Left cardiac atrium (tissue), 4 donors: ENCODE measurements at regions of chr4 and their contacts with region 1.

Region 1: GRCh38 chr4:101347557-101348366 is 436 bp upstream of the PPP3CA start:
- DNase-seq: peak; percentile 99
- ATAC-seq: peak; percentile 92 to 95

Region 2: GRCh38 chr4:101169044-101170014 is 178.4 kb before region 1 on chr4:
- intact Hi-C with region 1: loop called in 1 of 2 experiments (anchors 5 kb)
- DNase-seq: peak; percentile 47
- ATAC-seq: peak; percentile 93 to 97

Region 3: GRCh38 chr4:101191302-101192098 is 156.3 kb before region 1 on chr4:
- intact Hi-C with region 1: loop called in 1 of 2 experiments (anchors 5 kb)
- DNase-seq: peak; percentile 85
- ATAC-seq: peak; percentile 97 to 98